Posterior cingulate gyrus (tissue), 11 donors: ENCODE measurements at regions of chr13 and their contacts with region 1.

Region 1: DNA sequence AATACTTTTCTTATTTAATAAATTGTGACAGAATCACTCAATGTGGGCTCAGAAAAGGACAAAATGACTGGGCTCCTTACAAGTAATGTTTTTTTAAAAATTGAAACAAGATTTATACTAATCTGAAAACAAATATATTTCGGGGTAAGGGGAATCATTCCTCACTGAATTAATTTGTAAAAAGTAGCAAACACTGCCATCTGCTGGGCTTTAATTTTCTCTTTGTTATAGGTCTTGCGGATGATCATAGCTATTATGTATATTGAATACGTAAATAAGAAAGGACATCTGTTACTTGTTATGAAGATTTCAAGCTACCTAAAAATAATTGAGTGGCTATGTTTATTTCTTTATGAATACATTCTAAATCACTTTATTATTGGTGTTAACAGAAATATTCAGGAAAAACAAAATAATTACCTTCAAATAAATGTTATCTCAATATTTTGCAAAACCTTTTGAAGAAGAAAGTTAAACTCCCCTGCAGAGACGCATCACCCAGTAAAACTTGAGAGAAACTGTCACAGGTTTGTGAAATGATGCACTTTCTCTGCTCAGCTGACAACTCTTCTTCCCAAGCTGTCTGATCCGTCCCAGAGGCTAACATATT is 17.8 kb upstream of the ENOX1 start:
- DNase-seq: no peak

Region 2: GRCh38 chr13:42594970-42595571 is 1209.5 kb before region 1 on chr13:
- intact Hi-C with region 1: loop called (anchors 10 kb)
- DNase-seq: peak in 6 of 10 donors; percentile 39 to 89 (median 50)

Region 3: DNA sequence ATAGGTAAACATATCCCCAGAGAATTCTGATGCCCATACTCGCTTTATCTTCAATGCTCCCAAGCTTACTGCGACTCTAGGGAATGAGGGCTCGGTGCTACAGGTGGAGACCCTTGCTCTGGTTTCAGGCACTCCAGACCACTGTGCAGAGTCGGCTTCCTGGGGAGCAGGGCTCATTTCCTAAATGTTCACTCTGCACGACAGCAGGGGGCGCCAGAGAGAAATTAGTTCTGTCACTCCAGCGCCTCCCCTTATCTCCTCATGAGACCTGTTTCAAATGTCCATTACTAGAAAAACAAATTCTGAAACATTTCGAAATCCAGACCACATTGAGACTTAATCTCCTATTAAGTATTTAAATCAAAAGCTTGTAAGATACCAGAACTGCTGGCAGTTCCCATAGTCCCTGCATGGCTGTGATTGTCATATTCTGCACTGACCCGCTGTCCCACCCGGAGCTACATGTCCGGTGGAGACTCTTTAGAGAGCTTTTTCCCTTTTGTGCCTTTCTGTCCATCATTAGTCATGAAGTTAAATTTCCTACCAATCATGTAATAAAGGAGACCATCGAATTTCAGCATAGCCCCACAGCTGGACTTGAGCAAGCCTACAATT is 834.9 kb before region 1 on chr13:
- intact Hi-C with region 1: loop called (anchors 10 kb)
- DNase-seq: peak; percentile 22 to 94 (median 80)

Region 4: DNA sequence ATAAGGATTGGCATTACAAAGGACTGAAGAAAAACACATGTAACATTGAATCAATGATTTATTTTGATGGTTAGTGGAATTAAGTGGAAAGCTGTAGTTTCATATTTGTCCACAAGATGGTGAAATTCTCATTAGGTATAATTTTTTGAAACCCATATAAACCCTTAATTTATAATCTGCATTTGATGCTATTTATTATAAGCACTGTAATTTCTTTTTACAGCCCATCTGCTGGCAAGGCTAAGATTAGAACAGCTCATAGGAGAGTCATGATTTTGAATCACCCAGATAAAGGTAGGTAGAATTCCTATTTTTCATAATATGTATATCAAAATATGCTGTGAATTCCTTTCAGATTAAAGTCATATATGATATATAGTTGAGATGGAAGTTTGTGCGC is 719.0 kb before region 1 on chr13:
- intact Hi-C with region 1: loop called (anchors 5 kb)
- DNase-seq: no peak

Region 5: GRCh38 chr13:43464578-43465264 is 339.8 kb before region 1 on chr13:
- intact Hi-C with region 1: no loop called
- DNase-seq: no peak